ENCODE measurements at regions of chr2 and their contacts with region 1.

Region 1: GRCh38 chr2:174748948-174749347 is 15.3 kb downstream of the CHRNA1 start:
- DNase-seq: peak; percentile 50
- ATAC-seq: peak; percentile 94
- H3K4me3 ChIP-seq: no peak overlapping the region
- H3K27ac ChIP-seq: no peak overlapping the region
- H3K4me1 ChIP-seq: no peaks in the 10 kb centered on the region; the same call in 1 of the 2 replicates
- H3K27me3 ChIP-seq: peaks cover 6% of the 10 kb centered on the region
- CTCF ChIP-seq: peak; percentile 77
- POLR2A ChIP-seq: no peak
- RAD21 ChIP-seq: peak; percentile 82

Region 2: DNA sequence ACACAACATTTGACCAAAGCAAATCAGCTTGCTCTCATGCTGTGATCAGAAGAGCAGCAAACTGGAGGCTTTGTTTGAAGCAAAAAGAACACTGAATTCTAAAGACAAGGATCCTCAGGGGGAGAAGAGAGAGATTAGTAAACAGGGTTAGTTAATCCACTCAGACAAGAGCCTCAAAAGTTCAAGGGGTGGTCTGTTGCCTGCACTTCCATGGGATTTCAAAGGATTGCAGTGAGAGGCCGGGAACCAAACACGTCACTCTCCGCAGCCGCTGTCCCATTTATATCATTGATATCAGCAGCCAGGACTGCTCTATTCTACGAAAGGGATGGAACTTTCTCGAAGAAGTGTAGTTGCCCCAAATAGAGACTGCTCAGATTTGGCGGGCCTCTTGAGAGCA is 686.0 kb before region 1 on chr2:
- CTCF ChIA-PET with region 1: no interaction called
- POLR2A ChIA-PET with region 1: no interaction called
- dilution Hi-C with region 1: no loop called
- in situ Hi-C with region 1: no loop called
- intact Hi-C with region 1: no loop called
- DNase-seq: no peak
- ATAC-seq: no peak
- H3K4me3 ChIP-seq: no peak overlapping the region
- H3K27ac ChIP-seq: no peak overlapping the region
- H3K4me1 ChIP-seq: peaks cover 9% of the 10 kb centered on the region; the same call in 1 of the 2 replicates
- H3K27me3 ChIP-seq: no peaks in the 10 kb centered on the region
- CTCF ChIP-seq: no peak
- POLR2A ChIP-seq: no peak
- RAD21 ChIP-seq: no peak

Region 3: DNA sequence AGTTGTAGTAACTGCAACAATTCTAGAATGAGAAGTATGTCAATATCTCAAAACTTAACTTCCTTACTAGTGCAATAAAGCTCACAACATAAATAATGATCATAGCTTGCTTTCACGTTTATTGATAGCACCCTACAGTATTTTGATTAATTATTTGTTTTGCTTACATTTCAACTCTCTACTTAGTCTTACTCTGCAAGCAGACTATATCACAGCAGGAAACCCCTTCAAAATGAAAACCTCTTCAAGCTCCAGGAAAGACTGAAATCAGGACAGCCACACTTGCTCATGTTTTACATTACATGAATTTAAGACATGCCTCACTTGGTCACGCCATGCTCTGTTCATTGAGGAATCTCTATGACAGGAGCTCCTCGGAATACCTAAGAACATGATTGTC is 503.9 kb before region 1 on chr2:
- CTCF ChIA-PET with region 1: no interaction called
- POLR2A ChIA-PET with region 1: no interaction called
- dilution Hi-C with region 1: no loop called
- in situ Hi-C with region 1: no loop called
- intact Hi-C with region 1: no loop called
- DNase-seq: no peak
- ATAC-seq: no peak
- H3K4me3 ChIP-seq: no peak overlapping the region
- H3K27ac ChIP-seq: no peak overlapping the region
- H3K4me1 ChIP-seq: no peaks in the 10 kb centered on the region
- H3K27me3 ChIP-seq: no peaks in the 10 kb centered on the region
- CTCF ChIP-seq: no peak
- POLR2A ChIP-seq: no peak
- RAD21 ChIP-seq: no peak

Region 4: DNA sequence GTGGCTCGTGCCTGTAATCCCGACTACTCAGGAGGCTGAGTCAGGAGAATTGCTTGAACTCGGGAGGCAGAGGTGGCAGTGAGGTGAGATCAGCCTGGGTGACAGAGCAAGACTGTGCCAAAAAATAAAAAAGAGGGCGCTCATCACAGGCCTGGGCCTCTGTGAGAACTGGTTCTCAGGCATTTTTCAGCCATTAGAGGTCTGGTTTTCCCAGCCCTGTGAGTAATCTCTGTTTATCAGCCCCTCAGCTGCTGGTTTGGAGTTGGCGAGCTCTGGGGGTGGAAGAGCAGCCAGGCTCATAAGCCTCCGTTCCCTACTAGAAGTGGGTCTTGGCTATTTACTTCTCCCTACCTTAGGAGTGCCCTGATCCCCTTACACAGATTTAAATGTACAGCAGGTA is 37.7 kb before region 1 on chr2:
- CTCF ChIA-PET with region 1: no interaction called
- POLR2A ChIA-PET with region 1: no interaction called
- dilution Hi-C with region 1: no loop called
- in situ Hi-C with region 1: no loop called
- intact Hi-C with region 1: loop called (anchors 2 kb)
- DNase-seq: peak; percentile 84
- ATAC-seq: peak; percentile 76
- H3K4me3 ChIP-seq: no peak overlapping the region
- H3K27ac ChIP-seq: no peak overlapping the region
- H3K4me1 ChIP-seq: no peaks in the 10 kb centered on the region
- H3K27me3 ChIP-seq: peaks cover 2% of the 10 kb centered on the region
- CTCF ChIP-seq: no peak
- POLR2A ChIP-seq: no peak
- RAD21 ChIP-seq: no peak

Region 5: GRCh38 chr2:174771631-174772471 is 22.9 kb after region 1 on chr2:
- CTCF ChIA-PET with region 1: interaction called, 12 read pairs
- POLR2A ChIA-PET with region 1: no interaction called
- dilution Hi-C with region 1: no loop called
- in situ Hi-C with region 1: no loop called
- intact Hi-C with region 1: no loop called
- DNase-seq: peak; percentile 82
- ATAC-seq: peak; percentile 86
- H3K4me3 ChIP-seq: no peak overlapping the region
- H3K27ac ChIP-seq: peak overlapping the region; percentile 93
- H3K4me1 ChIP-seq: peaks cover 24% of the 10 kb centered on the region
- H3K27me3 ChIP-seq: no peaks in the 10 kb centered on the region
- CTCF ChIP-seq: peak; percentile 94
- POLR2A ChIP-seq: no peak
- RAD21 ChIP-seq: peak; percentile 94

Region 6: DNA sequence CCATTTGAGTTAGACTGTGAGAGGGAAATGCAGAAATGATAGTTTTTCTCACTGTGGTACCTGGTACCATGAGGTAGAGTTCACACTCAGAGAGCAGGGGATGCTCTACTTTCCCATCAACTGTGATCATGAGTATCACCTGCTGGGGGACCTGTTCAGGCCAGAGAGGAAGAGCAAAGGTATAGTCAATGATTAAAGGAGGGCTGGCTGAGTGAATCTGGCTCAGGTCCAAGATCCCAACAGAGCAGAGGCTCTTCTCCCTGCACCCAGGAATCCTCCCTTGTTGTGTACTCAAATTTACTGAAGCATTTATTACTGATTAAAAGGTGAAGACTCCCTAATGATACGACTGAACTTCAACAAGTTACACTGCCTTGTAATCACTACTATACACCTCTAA is 119.9 kb after region 1 on chr2:
- CTCF ChIA-PET with region 1: no interaction called
- POLR2A ChIA-PET with region 1: no interaction called
- dilution Hi-C with region 1: no loop called
- in situ Hi-C with region 1: no loop called
- intact Hi-C with region 1: no loop called
- DNase-seq: no peak
- ATAC-seq: no peak
- H3K4me3 ChIP-seq: no peak overlapping the region
- H3K27ac ChIP-seq: no peak overlapping the region
- H3K4me1 ChIP-seq: peaks cover 3% of the 10 kb centered on the region
- H3K27me3 ChIP-seq: no peaks in the 10 kb centered on the region
- CTCF ChIP-seq: no peak
- POLR2A ChIP-seq: no peak
- RAD21 ChIP-seq: no peak

Region 7: DNA sequence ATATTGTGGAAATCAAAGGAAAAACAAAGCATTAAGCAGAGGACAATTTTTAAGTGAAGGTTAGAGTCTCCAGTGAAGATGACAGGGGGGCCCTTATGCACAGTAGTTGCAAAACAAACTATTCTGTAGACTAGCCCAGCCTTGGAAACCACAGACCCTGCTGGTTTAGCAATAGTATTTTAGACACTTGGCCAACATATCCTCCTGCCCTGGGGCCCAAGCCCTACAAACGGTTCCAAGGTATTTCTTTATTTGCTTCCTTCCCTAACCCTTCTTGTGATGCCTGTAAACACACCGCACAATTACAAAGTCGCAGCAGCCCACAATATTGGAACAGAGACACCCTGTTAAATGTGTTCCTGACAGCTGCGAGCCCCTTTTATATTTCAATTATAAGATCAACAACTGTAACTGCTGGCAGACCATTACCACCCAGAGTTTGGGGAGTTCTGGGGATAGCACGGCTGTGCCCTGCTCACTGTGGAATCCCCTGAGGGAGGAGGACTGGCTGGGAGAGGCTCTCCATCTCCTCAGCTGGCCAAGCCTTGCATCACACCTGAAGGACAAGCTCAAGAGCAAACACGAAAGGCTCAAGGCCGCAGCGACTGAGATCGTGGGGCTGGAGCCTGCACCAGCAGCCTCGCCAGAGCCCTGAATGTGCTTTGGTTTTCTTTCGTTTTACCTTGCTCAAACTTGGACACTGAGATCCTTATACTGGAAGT is 714.8 kb after region 1 on chr2:
- CTCF ChIA-PET with region 1: no interaction called
- POLR2A ChIA-PET with region 1: no interaction called
- dilution Hi-C with region 1: no loop called
- in situ Hi-C with region 1: no loop called
- intact Hi-C with region 1: no loop called
- DNase-seq: no peak
- ATAC-seq: no peak
- H3K4me3 ChIP-seq: no peak overlapping the region
- H3K27ac ChIP-seq: no peak overlapping the region
- H3K4me1 ChIP-seq: no peaks in the 10 kb centered on the region
- H3K27me3 ChIP-seq: no peaks in the 10 kb centered on the region
- CTCF ChIP-seq: no peak
- POLR2A ChIP-seq: no peak
- RAD21 ChIP-seq: no peak